Activated B cell treated with CpG ODN at 0.5 μM for 24 hours (primary cell): ENCODE measurements at regions of chr20 and their contacts with region 1.

Region 1: GRCh38 chr20:17617551-17618223 is 47.8 kb downstream of the DSTN start:
- DNase-seq: peak; percentile 20
- ATAC-seq: peak; percentile 70
- H3K4me3 Mint-ChIP-seq: no peak overlapping the region
- H3K27ac Mint-ChIP-seq: no peak overlapping the region
- H3K4me1 Mint-ChIP-seq: peaks cover 2% of the 10 kb centered on the region
- H3K27me3 Mint-ChIP-seq: no peaks in the 10 kb centered on the region
- CTCF ChIP-seq: no peak

Region 2: GRCh38 chr20:17569616-17570346 is 47.9 kb before region 1 on chr20 and contains the start of gene DSTN:
- CTCF ChIA-PET with region 1: no interaction called
- POLR2A ChIA-PET with region 1: interaction called, 3 read pairs
- intact Hi-C with region 1: loop called (anchors 5 kb)
- DNase-seq: peak; percentile 88
- ATAC-seq: peak; percentile 89
- H3K4me3 Mint-ChIP-seq: peak within 1 kb of the TSS; percentile 93
- H3K27ac Mint-ChIP-seq: peak within 1 kb of the TSS; percentile 85
- H3K4me1 Mint-ChIP-seq: peaks cover 16% of the 10 kb centered on the region
- H3K27me3 Mint-ChIP-seq: peaks cover 2% of the 10 kb centered on the region
- CTCF ChIP-seq: no peak
- total RNA-seq, gene DSTN: 14.4 and 20.1 TPM in 2 replicates